ENCODE measurements at regions of chr4 and their contacts with region 1.

Region 1: GRCh38 chr4:52712172-52712990 is 38.8 kb downstream of the ERVMER34-1 start:
- DNase-seq: peak; percentile 98

Region 2: GRCh38 chr4:52545099-52546069 is 167.0 kb before region 1 on chr4:
- intact Hi-C with region 1: loop called (anchors 5 kb)
- DNase-seq: peak; percentile 84

Region 3: DNA sequence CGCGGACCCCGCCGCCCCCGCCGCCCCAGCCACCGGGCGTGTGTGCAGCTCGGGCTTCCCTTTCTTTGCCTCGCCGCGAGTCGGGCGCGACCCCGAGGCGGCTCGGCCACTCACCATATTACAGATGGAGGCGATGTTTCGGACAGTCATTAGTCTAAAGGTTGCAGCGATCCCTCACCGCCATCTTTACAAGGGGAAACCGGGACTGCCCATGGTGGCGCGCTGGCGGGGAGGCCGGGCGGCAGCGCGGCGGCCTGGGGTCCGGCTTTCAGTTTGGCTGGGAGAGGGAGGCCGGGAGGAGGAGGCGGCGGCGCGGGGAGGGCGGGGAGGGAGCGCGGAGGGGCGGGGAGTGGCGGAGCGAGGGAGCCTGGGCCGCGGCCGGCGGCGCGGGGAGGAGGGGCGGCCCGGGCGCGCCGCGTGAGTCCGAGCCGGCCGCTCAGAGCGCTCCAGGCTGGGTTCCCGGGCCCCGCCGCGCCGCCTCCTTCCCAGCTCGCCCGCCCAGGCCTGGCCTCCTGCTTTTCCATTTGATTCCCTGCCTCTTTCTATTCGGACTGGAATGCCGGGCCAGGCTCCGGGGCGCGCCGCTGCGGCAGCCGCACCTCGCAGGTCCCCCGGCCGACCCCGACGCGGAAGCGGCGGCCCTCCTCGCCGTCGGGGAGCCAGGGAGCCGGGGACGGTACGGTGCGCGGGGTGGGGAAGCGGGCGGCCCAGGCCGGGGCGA is 53.2 kb before region 1 on chr4 and contains the start of gene USP46:
- intact Hi-C with region 1: loop called (anchors 1 kb)
- DNase-seq: peak; percentile 90
- total RNA-seq, gene USP46: 111 TPM

Region 4: DNA sequence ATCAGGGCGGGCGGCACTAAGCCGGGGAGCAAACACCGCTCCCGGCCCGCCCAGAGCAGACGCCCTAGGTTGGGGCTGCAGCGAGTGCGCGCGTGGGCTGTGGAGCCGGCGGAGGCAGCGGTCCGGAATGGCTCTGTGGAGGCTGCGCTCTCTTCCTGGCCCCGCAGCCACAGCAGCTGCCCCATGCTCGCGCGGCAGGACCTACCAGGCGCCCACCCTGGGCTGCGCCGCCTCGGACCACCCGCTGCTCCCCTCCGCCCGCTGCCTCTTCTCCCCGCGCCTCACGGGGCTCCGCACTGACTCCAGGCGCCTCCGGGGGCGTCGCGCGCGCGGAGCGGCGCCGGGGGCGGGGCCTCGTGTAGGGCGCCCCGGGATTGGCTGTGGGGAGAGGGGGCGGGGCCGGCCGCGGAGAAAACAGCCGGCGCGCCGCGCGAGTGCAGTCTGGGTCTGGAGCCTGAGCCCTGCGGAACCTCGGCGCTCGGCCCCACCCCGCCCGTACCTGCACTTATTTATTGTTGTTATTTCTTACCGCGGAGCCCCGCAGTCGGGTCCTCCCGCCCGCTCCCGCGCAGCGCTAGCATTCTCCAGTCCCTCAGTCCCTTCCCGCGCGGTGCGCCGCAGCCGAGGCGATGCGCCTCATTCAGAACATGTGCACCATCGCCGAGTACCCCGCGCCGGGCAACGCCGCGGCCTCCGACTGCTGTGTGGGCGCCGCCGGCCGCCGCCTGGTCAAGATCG is 149.7 kb after region 1 on chr4 and contains the start of gene RASL11B:
- intact Hi-C with region 1: loop called (anchors 2 kb)
- DNase-seq: peak; percentile 91
- total RNA-seq, gene RASL11B: 23.8 TPM

Region 5: GRCh38 chr4:52911684-52912294 is 199.4 kb after region 1 on chr4:
- intact Hi-C with region 1: loop called (anchors 5 kb)
- DNase-seq: no peak